Activated CD4-positive, alpha-beta T cell treated with anti-CD3 and anti-CD28 coated beads for 36 hours (primary cell): ENCODE measurements at regions of chr1 and their contacts with region 1.

Region 1: DNA sequence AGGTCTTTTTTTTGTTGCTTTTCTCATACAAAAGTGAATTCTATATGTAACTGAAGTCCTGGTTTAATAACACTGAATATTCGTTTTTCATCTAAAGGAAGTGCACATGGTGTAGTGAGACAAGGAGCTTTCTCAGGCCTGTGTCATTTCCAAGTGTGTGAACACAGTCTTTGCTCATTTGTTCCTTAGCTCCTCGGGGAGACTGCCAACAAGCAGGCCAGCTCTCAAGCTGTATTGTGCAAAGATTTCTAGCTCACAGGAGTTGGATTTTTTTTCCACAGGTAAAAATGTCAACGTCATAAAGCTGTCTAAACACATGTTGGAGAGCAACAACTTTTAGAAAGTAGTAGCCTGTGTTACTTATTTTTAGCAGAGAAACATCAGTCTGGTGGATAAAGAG is 87.8 kb upstream of the S1PR1 start:
- DNase-seq: no peak
- ATAC-seq: peak; percentile 40
- H3K4me3 Mint-ChIP-seq: no peak overlapping the region
- H3K27ac Mint-ChIP-seq: no peak overlapping the region
- H3K4me1 Mint-ChIP-seq: peaks cover 49% of the 10 kb centered on the region
- H3K27me3 Mint-ChIP-seq: no peaks in the 10 kb centered on the region

Region 2: GRCh38 chr1:100989306-100990077 is 159.5 kb before region 1 on chr1:
- CTCF ChIA-PET with region 1: no interaction called
- POLR2A ChIA-PET with region 1: no interaction called
- intact Hi-C with region 1: no loop called
- DNase-seq: no peak
- ATAC-seq: no peak
- H3K4me3 Mint-ChIP-seq: no peak overlapping the region
- H3K27ac Mint-ChIP-seq: no peak overlapping the region
- H3K4me1 Mint-ChIP-seq: peaks cover 7% of the 10 kb centered on the region
- H3K27me3 Mint-ChIP-seq: no peaks in the 10 kb centered on the region

Region 3: GRCh38 chr1:101167891-101168290 is 18.9 kb after region 1 on chr1:
- CTCF ChIA-PET with region 1: interaction called, 4 read pairs
- POLR2A ChIA-PET with region 1: no interaction called
- intact Hi-C with region 1: loop called in 1 of 2 experiments (anchors 2 kb)
- DNase-seq: no peak
- ATAC-seq: peak; percentile 92
- H3K4me3 Mint-ChIP-seq: no peak overlapping the region
- H3K27ac Mint-ChIP-seq: peak overlapping the region; percentile 74
- H3K4me1 Mint-ChIP-seq: peaks cover 35% of the 10 kb centered on the region
- H3K27me3 Mint-ChIP-seq: no peaks in the 10 kb centered on the region

Region 4: DNA sequence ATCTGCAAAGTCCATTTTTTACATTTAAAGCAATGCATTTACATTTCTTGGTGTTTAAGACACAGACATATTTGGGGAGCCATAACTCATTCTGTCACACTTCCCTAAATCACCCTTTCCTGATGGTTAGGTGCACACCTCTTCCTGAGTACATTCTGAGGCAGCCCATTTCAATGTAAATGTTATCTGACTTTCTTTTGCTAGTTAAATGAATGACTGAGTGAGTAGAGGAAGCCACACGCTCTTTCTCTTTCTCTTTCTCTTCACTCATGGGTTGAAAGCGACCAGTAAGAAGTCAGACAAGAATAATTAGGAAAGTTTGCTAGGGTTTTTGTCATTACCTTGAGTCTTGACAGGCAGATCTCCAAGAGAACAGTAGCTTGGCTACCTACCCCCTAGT is 231.0 kb after region 1 on chr1:
- CTCF ChIA-PET with region 1: no interaction called
- POLR2A ChIA-PET with region 1: no interaction called
- intact Hi-C with region 1: no loop called
- DNase-seq: no peak
- ATAC-seq: peak; percentile 81
- H3K4me3 Mint-ChIP-seq: no peak overlapping the region
- H3K27ac Mint-ChIP-seq: peak overlapping the region; percentile 11
- H3K4me1 Mint-ChIP-seq: peaks cover 9% of the 10 kb centered on the region
- H3K27me3 Mint-ChIP-seq: peaks cover 2% of the 10 kb centered on the region